A549 (cell line): ENCODE measurements at regions of chr19 and their contacts with region 1.

Region 1: GRCh38 chr19:19170053-19170872 is at the start of gene MEF2B:
- DNase-seq: peak in 1 of 2 experiments; percentile 18
- ATAC-seq: peak; percentile 26 to 70; a peak in 3 of 6 replicates
- H3K4me3 ChIP-seq: no peak within 1 kb of the TSS
- H3K27ac ChIP-seq: no peak within 1 kb of the TSS
- H3K4me1 ChIP-seq: peaks cover 5% of the 10 kb centered on the region; the same call in 1 of the 3 replicates
- CTCF ChIP-seq: no peak
- EP300 ChIP-seq: no peak
- POLR2A ChIP-seq: no peak
- RAD21 ChIP-seq: no peak
- polyA plus RNA-seq, gene MEF2B: 0.10 and 0.20 TPM in 2 replicates

Region 2: GRCh38 chr19:19122902-19123301 is 47.4 kb before region 1 on chr19:
- CTCF ChIA-PET with region 1: no interaction called
- POLR2A ChIA-PET with region 1: no interaction called
- DNase-seq: no peak
- ATAC-seq: no peak
- H3K4me3 ChIP-seq: no peak overlapping the region
- H3K27ac ChIP-seq: no peak overlapping the region
- H3K4me1 ChIP-seq: no peaks in the 10 kb centered on the region
- CTCF ChIP-seq: no peak
- EP300 ChIP-seq: no peak
- POLR2A ChIP-seq: no peak
- RAD21 ChIP-seq: no peak

Region 3: GRCh38 chr19:19145684-19146608 is 24.3 kb before region 1 on chr19:
- CTCF ChIA-PET with region 1: interaction called, 21 read pairs
- POLR2A ChIA-PET with region 1: no interaction called
- DNase-seq: peak; percentile 32 to 55
- ATAC-seq: peak; percentile 80 to 89; a peak in 5 of 6 replicates
- H3K4me3 ChIP-seq: no peak overlapping the region
- H3K27ac ChIP-seq: peak overlapping the region in 1 of 2 experiments; percentile 63; a peak in 2 of 6 replicates
- H3K4me1 ChIP-seq: no peaks in the 10 kb centered on the region
- CTCF ChIP-seq: peak; percentile 65
- EP300 ChIP-seq: no peak
- POLR2A ChIP-seq: no peak
- RAD21 ChIP-seq: peak; percentile 77 to 79

Region 4: GRCh38 chr19:19155495-19156219 is 14.6 kb before region 1 on chr19:
- CTCF ChIA-PET with region 1: interaction called, 21 read pairs
- POLR2A ChIA-PET with region 1: no interaction called
- DNase-seq: no peak
- ATAC-seq: no peak
- H3K4me3 ChIP-seq: no peak overlapping the region
- H3K27ac ChIP-seq: no peak overlapping the region
- H3K4me1 ChIP-seq: no peaks in the 10 kb centered on the region
- CTCF ChIP-seq: no peak
- EP300 ChIP-seq: no peak
- POLR2A ChIP-seq: no peak
- RAD21 ChIP-seq: no peak

Region 5: GRCh38 chr19:19262190-19263057 is 92.2 kb after region 1 on chr19:
- CTCF ChIA-PET with region 1: no interaction called
- POLR2A ChIA-PET with region 1: no interaction called
- DNase-seq: no peak
- ATAC-seq: no peak
- H3K4me3 ChIP-seq: no peak overlapping the region
- H3K27ac ChIP-seq: no peak overlapping the region
- H3K4me1 ChIP-seq: no peaks in the 10 kb centered on the region
- CTCF ChIP-seq: no peak
- EP300 ChIP-seq: no peak
- POLR2A ChIP-seq: no peak
- RAD21 ChIP-seq: no peak

Region 6: DNA sequence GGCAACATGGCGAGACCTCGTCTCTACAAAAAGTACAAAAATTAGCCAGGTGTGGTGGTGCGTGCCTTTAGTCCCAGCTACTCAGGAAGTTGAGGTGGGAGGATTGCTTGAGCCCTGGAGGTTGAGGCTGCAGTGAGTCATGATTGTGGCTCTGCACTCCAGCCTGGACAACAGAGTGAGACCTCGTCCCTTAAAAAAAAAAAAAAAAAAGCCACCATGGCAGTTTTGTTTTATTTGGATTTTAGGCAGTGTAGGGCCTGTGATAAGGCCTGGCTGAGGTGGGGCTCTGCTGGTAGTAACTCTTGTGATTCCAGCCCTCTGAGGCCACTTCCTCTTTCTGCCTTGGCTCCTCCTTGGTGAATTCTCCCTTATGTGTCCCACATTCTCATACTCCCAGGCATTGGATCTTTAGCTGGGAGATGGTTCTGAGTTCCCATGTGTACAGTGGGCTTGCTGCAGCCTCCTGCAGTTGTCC is 274.5 kb after region 1 on chr19:
- CTCF ChIA-PET with region 1: no interaction called
- POLR2A ChIA-PET with region 1: no interaction called
- DNase-seq: no peak
- ATAC-seq: peak in 1 of 2 experiments; percentile 40; a peak in 2 of 6 replicates
- H3K4me3 ChIP-seq: no peak overlapping the region
- H3K27ac ChIP-seq: no peak overlapping the region
- H3K4me1 ChIP-seq: no peaks in the 10 kb centered on the region
- CTCF ChIP-seq: no peak
- EP300 ChIP-seq: no peak
- POLR2A ChIP-seq: no peak
- RAD21 ChIP-seq: no peak